Ovary (tissue), 10 donors: ENCODE measurements at regions of chr1 and their contacts with region 1.

Region 1: DNA sequence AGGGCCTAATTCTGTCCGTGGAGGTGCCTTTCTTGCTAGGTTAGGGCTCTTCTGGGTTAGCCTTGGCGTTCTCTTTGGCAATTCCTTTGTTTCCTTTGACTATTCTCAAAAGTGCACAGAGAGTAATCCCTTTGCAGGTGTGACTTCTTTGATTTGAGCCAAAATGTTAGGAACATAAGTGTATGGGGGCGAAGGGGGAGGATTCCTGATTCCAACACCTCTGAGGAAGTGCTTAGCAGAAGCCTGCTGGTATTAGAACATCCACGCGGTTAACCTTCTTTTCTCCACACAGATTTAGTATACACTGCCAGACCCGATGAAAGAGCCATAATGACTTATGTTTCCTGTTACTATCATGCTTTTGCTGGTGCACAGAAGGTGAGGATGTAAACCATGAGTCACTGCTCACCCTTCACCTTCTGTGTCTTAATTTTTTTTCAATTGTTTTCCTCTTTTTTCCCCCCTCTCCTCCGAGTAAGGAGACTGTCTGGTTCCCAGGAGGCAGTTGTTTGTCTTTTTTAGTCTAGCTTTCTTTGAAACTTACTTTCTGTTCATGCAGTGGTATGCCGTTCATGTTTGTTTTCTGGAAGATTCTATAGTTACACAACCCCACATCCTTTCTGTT is 48.0 kb downstream of the ACTN2 start:
- DNase-seq: no peak
- H3K4me3 ChIP-seq: no peak overlapping the region
- H3K27ac ChIP-seq: no peak overlapping the region
- H3K4me1 ChIP-seq: no peaks in the 10 kb centered on the region
- H3K27me3 ChIP-seq: no peaks in the 10 kb centered on the region
- CTCF ChIP-seq: no peak
- EP300 ChIP-seq: no peak
- POLR2A ChIP-seq: no peak

Region 2: DNA sequence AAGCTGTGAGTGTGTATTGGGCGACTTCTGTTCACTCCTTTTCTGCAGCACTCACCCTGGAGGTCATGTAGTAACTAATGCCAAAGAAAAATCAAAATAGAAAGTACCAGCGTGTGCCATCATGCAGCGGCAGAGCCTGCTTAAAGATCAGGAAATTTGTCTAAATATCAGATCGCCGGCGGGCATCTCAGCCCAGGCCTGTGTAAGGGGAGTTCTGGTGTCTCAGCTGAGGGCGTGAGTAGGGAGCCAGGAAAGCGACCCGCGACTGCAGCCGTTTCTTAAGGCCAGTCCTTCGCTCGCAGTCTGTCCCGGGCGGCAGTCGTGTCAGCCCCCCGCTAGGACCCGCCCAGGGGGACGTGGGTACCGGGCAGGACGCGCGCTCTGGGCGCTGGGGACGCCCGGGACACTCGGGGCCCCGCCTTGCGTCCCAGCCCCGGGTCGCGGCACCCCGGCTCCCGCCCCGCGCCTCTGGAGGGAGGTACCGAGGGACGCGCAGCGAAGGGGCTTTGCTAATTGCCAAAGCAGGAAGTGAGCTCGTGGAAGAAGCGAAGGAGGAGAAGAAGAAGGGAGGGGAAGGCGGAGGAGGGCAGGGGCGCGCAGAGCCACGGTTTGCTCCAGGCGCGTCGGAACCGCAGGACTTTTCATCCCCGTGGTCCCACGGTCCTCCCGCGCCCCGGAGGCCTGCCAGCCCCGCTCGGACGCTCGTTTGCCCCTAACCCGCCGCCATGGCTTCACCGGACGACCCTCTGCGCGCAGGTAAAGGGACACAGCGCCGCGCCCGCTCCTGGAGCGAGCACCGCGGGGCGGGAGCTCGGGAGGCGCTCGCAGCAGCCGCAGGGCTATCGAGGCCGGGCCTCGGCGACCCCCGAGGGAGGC is 339.1 kb before region 1 on chr1:
- intact Hi-C with region 1: no loop called
- DNase-seq: peak in 4 of 5 donors; percentile 20 to 38 (median 27)
- H3K4me3 ChIP-seq: peak overlapping the region; percentile 46
- H3K27ac ChIP-seq: no peak overlapping the region
- H3K4me1 ChIP-seq: no peaks in the 10 kb centered on the region
- H3K27me3 ChIP-seq: no peaks in the 10 kb centered on the region
- CTCF ChIP-seq: no peak
- EP300 ChIP-seq: no peak
- POLR2A ChIP-seq: no peak

Region 3: GRCh38 chr1:236757640-236758039 is 23.4 kb after region 1 on chr1:
- intact Hi-C with region 1: loop called in 1 of 4 experiments (anchors 1 kb)
- DNase-seq: no peak
- H3K4me3 ChIP-seq: no peak overlapping the region
- H3K27ac ChIP-seq: no peak overlapping the region
- H3K4me1 ChIP-seq: no peaks in the 10 kb centered on the region
- H3K27me3 ChIP-seq: no peaks in the 10 kb centered on the region
- CTCF ChIP-seq: no peak
- EP300 ChIP-seq: no peak
- POLR2A ChIP-seq: no peak